ENCODE measurements at regions of chr12 and their contacts with region 1.

Region 1: DNA sequence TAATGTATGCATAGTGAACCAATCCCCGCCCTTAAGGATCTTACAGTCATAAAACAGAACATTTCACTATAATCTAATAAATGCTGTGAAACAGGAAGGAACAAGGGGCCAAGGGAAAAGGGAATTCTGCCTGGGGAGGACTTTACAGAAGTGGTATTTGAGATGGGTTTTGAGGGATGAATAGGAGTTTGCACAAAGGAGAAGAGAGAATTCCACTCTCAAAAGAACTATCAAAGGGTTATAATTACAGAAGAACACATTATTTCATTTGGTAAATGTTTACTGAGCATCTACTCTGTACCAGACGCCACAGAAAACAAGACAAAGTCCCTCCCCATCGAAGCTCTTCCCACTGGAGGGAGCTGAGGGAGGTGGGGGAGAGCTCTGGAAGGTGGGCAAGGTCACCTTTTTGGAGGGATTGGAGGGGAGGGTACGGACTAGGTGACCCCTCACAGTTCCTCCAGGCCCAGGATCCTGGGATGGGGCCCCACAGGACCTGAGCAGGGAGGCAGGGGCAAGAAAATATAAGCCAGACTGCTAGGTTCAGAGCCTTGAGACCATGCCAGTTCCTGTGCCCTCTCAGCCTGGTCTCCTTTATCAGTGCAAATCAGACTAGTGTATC is 24.5 kb downstream of the PHETA1 start:
- DNase-seq: no peak
- H3K4me3 Mint-ChIP-seq: no peak overlapping the region
- H3K27ac Mint-ChIP-seq: no peak overlapping the region
- H3K4me1 Mint-ChIP-seq: no peaks in the 10 kb centered on the region
- H3K27me3 Mint-ChIP-seq: no peaks in the 10 kb centered on the region

Region 2: GRCh38 chr12:111330800-111331752 is 13.3 kb before region 1 on chr12:
- intact Hi-C with region 1: loop called (anchors 1 kb)
- DNase-seq: no peak
- H3K4me3 Mint-ChIP-seq: no peak overlapping the region
- H3K27ac Mint-ChIP-seq: no peak overlapping the region
- H3K4me1 Mint-ChIP-seq: no peaks in the 10 kb centered on the region
- H3K27me3 Mint-ChIP-seq: peaks cover 2% of the 10 kb centered on the region

Region 3: DNA sequence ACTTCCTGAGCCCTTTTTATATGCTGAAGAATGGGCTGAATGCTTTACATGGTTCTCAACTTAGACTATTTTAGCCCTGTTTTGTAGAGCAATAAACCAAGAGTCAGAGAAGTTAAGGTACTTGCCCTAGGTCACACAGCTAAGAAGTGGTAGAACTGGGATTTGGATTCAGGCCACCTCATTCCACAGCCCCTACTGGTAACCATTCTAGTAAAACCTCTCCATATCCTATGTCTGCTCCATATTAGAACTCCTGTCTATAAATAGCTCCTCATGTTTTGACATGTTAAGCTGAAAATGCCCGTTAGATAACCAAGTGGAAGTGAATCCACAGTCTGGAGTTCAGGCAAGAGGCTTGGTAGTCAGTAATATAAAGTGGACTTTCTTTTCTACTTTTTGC is 926.3 kb after region 1 on chr12:
- intact Hi-C with region 1: no loop called
- DNase-seq: no peak
- H3K4me3 Mint-ChIP-seq: no peak overlapping the region
- H3K27ac Mint-ChIP-seq: no peak overlapping the region
- H3K4me1 Mint-ChIP-seq: peaks cover 2% of the 10 kb centered on the region
- H3K27me3 Mint-ChIP-seq: no peaks in the 10 kb centered on the region